AG04449 (cell line): ENCODE measurements at regions of chr3 and their contacts with region 1.

Region 1: GRCh38 chr3:170689893-170690660 is 104.2 kb upstream of the SLC7A14 start:
- DNase-seq: no peak
- H3K4me3 ChIP-seq: no peak overlapping the region
- CTCF ChIP-seq: peak; percentile 74

Region 2: GRCh38 chr3:170703121-170703588 is 13.1 kb after region 1 on chr3:
- CTCF ChIA-PET with region 1: interaction called, 18 read pairs
- POLR2A ChIA-PET with region 1: interaction called, 6 read pairs
- DNase-seq: peak; percentile 82
- H3K4me3 ChIP-seq: no peak overlapping the region
- CTCF ChIP-seq: no peak